Left ventricle myocardium superior (tissue), 1 donor: ENCODE measurements at regions of chr17 and their contacts with region 1.

Region 1: DNA sequence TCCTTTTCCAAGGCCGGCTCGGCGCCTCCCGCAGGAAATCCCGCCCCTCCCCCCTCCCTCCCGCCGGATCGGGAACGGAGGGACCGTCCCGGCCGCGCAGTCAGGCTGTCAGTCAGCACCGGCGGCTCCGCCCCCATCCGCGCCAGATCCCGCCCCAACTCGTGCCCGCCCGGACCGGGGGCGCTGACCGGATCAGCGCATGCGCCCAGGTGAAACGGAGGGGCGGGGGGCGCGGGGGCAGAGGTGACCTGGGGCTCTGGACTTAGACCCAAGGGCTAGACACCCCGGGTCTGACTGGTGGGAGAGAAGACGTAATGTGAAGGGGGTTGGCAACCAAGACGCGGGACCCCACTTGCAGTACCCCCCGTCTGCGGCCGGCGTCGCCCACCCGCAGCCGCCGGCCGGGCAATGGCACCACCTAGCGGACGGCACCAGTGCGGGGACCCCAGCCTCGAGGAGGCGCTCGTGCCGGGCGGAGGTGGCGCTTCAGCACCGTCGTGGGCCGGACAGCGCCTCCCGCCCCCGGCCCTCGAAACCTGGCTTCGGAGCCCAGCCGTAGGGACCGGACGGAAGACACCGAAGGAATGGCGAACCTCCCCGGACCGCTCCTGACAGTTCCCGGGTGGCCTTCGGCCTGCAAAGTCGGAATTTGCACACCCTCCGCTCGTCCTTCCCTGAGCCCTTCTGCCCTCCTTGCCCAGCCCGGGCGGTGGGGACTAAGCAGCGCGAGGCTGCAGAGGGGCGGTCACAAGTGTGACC is at the start of gene CASKIN2:
- DNase-seq: peak; percentile 99
- ATAC-seq: peak; percentile 92
- total RNA-seq, gene CASKIN2: 36.6 TPM

Region 2: DNA sequence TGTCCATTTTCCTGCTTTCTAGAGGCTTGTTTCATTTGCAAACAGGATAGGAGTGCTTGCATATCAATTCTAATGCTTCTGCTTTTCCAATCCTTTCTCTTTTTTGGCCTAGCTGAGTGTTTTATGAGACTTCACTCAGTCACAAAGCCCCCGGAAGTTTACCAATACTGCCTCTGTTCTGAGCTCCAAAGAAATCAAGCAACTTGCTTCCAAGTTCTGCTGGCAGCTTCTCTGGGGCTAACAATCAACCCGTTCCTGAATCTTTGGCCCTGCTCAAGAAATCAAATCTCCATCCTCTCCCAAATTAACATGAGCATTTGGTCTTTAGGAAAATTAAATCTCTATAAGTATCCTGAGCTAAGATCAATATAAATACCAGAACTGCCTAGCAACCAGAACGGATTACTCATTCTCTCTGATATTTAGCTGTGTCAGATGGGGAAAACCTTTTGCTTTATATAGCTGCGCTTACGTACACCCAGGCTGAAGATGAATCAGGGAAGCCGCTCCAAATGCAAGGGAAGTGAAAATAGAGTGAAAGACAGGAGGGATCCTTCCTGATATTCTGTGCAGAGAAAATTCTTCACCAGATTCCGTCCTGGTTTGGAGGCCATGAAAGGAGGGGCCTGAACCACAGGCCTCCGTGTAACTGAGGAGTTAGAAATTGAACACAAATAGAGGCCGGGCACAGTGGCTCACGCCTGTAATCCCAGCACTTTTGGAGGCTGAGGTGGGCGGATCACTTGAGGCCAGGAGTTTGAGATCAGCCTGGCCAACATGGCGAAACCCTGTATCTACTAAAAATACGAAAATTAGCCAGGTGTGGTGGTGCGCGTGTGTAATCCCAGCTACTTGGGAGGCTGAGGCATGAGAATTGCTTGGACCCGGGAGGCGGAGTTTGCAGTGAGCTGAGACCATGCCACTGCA is 86.9 kb before region 1 on chr17:
- intact Hi-C with region 1: loop called (anchors 10 kb)
- DNase-seq: no peak
- ATAC-seq: no peak